Esophagus squamous epithelium (tissue), 5 donors: ENCODE measurements at regions of chr18 and their contacts with region 1.

Region 1: GRCh38 chr18:12726774-12727550 is 24.1 kb downstream of the PSMG2 start:
- DNase-seq: no peak
- H3K4me3 ChIP-seq: no peak overlapping the region
- H3K27ac ChIP-seq: no peak overlapping the region
- H3K4me1 ChIP-seq: no peaks in the 10 kb centered on the region
- H3K27me3 ChIP-seq: no peaks in the 10 kb centered on the region
- CTCF ChIP-seq: peak; percentile 80 to 94 (median 90)
- POLR2A ChIP-seq: no peak

Region 2: GRCh38 chr18:12060182-12060870 is 666.6 kb before region 1 on chr18:
- intact Hi-C with region 1: no loop called
- DNase-seq: no peak
- H3K4me3 ChIP-seq: no peak overlapping the region
- H3K27ac ChIP-seq: no peak overlapping the region
- H3K4me1 ChIP-seq: no peaks in the 10 kb centered on the region
- H3K27me3 ChIP-seq: no peaks in the 10 kb centered on the region
- CTCF ChIP-seq: no peak
- POLR2A ChIP-seq: no peak

Region 3: GRCh38 chr18:12934454-12935071 is 207.6 kb after region 1 on chr18:
- intact Hi-C with region 1: loop called (anchors 2 kb)
- DNase-seq: no peak
- H3K4me3 ChIP-seq: no peak overlapping the region
- H3K27ac ChIP-seq: no peak overlapping the region
- H3K4me1 ChIP-seq: peaks cover 0 to 9% (median 5%) of the 10 kb centered on the region in 3 donors
- H3K27me3 ChIP-seq: peaks cover 0 to 10% (median 0%) of the 10 kb centered on the region in 4 donors
- CTCF ChIP-seq: peak; percentile 56 to 91 (median 85)
- POLR2A ChIP-seq: no peak